Motor neuron (in vitro differentiated cells): ENCODE measurements at regions of chr4 and their contacts with region 1.

Region 1: GRCh38 chr4:183098723-183099536 is at the start of gene WWC2:
- ATAC-seq: peak; percentile 70 to 93 (median 88)
- H3K4me3 ChIP-seq: peak within 1 kb of the TSS; percentile 61 to 83 (median 76)
- H3K27ac ChIP-seq: no peak within 1 kb of the TSS
- H3K4me1 ChIP-seq: peaks cover 5 to 6% of the 10 kb centered on the region in 2 donors
- total RNA-seq, gene WWC2: 4.2 to 59.4 (median 12.9) TPM

Region 2: DNA sequence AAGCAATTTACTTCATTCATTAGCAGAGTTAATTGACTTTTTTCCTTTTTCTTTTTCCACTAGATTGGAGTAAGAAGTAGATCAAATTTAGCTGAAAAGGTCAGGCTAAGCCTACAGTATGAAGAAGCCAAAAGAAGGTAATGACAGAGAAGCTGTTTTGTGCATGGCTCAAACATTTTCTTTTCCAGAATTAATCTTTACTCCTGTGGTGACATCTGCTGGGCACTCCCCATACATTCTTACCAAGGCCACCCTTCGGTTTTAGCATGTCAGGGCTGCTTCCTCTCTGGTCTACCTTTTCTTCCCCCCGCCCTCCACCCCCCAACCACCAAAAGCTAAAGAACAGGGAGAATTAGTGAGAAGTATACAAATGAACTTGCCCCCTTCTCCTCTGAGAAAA is 150.9 kb after region 1 on chr4:
- in situ Hi-C with region 1: loop called in 2 of 9 experiments (anchors 25 kb)
- ATAC-seq: peak in 5 of 8 experiments; percentile 36 to 83 (median 67)
- H3K4me3 ChIP-seq: no peak overlapping the region
- H3K27ac ChIP-seq: no peak overlapping the region
- H3K4me1 ChIP-seq: no peaks in the 10 kb centered on the region

Region 3: GRCh38 chr4:183261953-183262775 is 163.2 kb after region 1 on chr4:
- in situ Hi-C with region 1: loop called in 1 of 9 experiments (anchors 25 kb)
- ATAC-seq: peak; percentile 85 to 96 (median 89)
- H3K4me3 ChIP-seq: no peak overlapping the region
- H3K27ac ChIP-seq: no peak overlapping the region
- H3K4me1 ChIP-seq: peaks cover 9 to 19% of the 10 kb centered on the region in 2 donors